GM10248 (cell line): ENCODE measurements at regions of chr15 and their contacts with region 1.

Region 1: GRCh38 chr15:99651023-99651807 is 82.0 kb downstream of the LYSMD4 start:
- DNase-seq: no peak
- CTCF ChIP-seq: no peak

Region 2: GRCh38 chr15:99662903-99663302 is 11.7 kb after region 1 on chr15:
- CTCF ChIA-PET with region 1: interaction called, 13 read pairs
- POLR2A ChIA-PET with region 1: no interaction called
- DNase-seq: no peak
- CTCF ChIP-seq: no peak

Region 3: DNA sequence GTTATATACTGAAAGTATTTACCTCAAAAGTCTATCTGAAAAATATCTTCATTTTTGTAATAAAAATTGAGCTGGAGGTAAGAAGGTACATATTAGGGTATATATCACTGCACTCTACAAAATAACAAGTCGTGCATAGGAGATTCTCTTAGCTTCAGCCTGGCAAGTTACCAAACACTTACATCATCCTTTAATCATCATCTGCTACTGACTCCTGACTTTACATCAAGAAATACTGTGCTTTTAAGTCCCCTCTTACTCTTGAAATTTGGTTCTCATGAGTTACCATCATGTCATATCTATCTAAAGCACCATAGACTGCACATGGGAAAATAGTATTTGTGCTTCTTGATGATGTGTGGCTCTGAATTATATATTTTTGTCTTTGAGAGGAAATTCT is 31.2 kb after region 1 on chr15:
- CTCF ChIA-PET with region 1: no interaction called
- POLR2A ChIA-PET with region 1: no interaction called
- DNase-seq: no peak
- CTCF ChIP-seq: no peak

Region 4: GRCh38 chr15:99749386-99749785 is 98.2 kb after region 1 on chr15:
- CTCF ChIA-PET with region 1: no interaction called
- POLR2A ChIA-PET with region 1: no interaction called
- DNase-seq: no peak
- CTCF ChIP-seq: no peak

Region 5: DNA sequence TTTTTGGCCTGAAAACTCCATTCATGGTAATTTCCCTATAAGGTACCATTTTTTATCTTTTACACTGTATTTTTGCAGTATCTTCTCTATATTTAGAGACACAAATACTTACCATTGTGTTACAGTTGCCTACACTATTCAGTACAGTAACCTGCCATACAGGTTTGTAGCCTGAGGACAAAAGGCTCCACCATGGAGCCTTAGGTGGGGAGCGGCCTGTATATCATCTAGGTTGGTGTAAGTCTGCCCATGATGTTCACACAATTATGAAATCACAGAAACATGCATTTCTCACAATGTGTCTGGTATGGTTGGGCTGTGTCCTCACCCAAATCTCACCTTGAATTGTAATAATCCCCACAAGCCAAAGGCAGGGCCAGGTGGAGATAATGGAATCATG is 125.9 kb after region 1 on chr15:
- CTCF ChIA-PET with region 1: no interaction called
- POLR2A ChIA-PET with region 1: no interaction called
- DNase-seq: no peak
- CTCF ChIP-seq: no peak